IMR-90 (cell line): ENCODE measurements at regions of chr5 and their contacts with region 1.

Region 1: GRCh38 chr5:119411935-119412602 is 40.2 kb upstream of the HSD17B4 start:
- DNase-seq: peak; percentile 81
- ATAC-seq: peak; percentile 94
- H3K4me3 ChIP-seq: peak overlapping the region; percentile 59
- H3K27ac ChIP-seq: peak overlapping the region; percentile 65
- H3K4me1 ChIP-seq: peaks cover 2% of the 10 kb centered on the region
- H3K27me3 ChIP-seq: peaks cover 4% of the 10 kb centered on the region
- CTCF ChIP-seq: peak; percentile 91
- POLR2A ChIP-seq: peak; percentile 58
- RAD21 ChIP-seq: peak; percentile 89

Region 2: GRCh38 chr5:118987988-118988865 is 423.8 kb before region 1 on chr5 and contains the start of gene DTWD2:
- CTCF ChIA-PET with region 1: interaction called, 31 read pairs
- POLR2A ChIA-PET with region 1: no interaction called
- dilution Hi-C with region 1: no loop called
- in situ Hi-C with region 1: loop called (anchors 5 kb)
- intact Hi-C with region 1: loop called (anchors 1 kb)
- DNase-seq: peak; percentile 88
- ATAC-seq: peak; percentile 98
- H3K4me3 ChIP-seq: peak within 1 kb of the TSS; percentile 66
- H3K27ac ChIP-seq: peak within 1 kb of the TSS; percentile 66
- H3K4me1 ChIP-seq: no peaks in the 10 kb centered on the region
- H3K27me3 ChIP-seq: no peaks in the 10 kb centered on the region
- CTCF ChIP-seq: peak; percentile 93
- POLR2A ChIP-seq: no peak
- RAD21 ChIP-seq: peak; percentile 82
- total RNA-seq, gene DTWD2: 1.8 and 2.5 TPM in 2 replicates

Region 3: GRCh38 chr5:119022017-119022745 is 389.9 kb before region 1 on chr5:
- CTCF ChIA-PET with region 1: interaction called, 12 read pairs
- POLR2A ChIA-PET with region 1: no interaction called
- dilution Hi-C with region 1: no loop called
- in situ Hi-C with region 1: loop called (anchors 10 kb)
- intact Hi-C with region 1: loop called (anchors 1 kb)
- DNase-seq: peak; percentile 57
- ATAC-seq: peak; percentile 80
- H3K4me3 ChIP-seq: no peak overlapping the region
- H3K27ac ChIP-seq: no peak overlapping the region
- H3K4me1 ChIP-seq: no peaks in the 10 kb centered on the region
- H3K27me3 ChIP-seq: no peaks in the 10 kb centered on the region
- CTCF ChIP-seq: peak; percentile 66
- POLR2A ChIP-seq: no peak
- RAD21 ChIP-seq: peak; percentile 80

Region 4: GRCh38 chr5:119267958-119268386 is 144.1 kb before region 1 on chr5:
- CTCF ChIA-PET with region 1: interaction called, 9 read pairs
- POLR2A ChIA-PET with region 1: no interaction called
- dilution Hi-C with region 1: no loop called
- in situ Hi-C with region 1: loop called (anchors 5 kb)
- intact Hi-C with region 1: loop called (anchors 1 kb)
- DNase-seq: peak; percentile 95
- ATAC-seq: peak; percentile 90
- H3K4me3 ChIP-seq: peak overlapping the region; percentile 76
- H3K27ac ChIP-seq: peak overlapping the region; percentile 76
- H3K4me1 ChIP-seq: peaks cover 4% of the 10 kb centered on the region; the same call in 1 of the 2 replicates
- H3K27me3 ChIP-seq: no peaks in the 10 kb centered on the region
- CTCF ChIP-seq: peak; percentile 62
- POLR2A ChIP-seq: no peak
- RAD21 ChIP-seq: peak; percentile 39

Region 5: DNA sequence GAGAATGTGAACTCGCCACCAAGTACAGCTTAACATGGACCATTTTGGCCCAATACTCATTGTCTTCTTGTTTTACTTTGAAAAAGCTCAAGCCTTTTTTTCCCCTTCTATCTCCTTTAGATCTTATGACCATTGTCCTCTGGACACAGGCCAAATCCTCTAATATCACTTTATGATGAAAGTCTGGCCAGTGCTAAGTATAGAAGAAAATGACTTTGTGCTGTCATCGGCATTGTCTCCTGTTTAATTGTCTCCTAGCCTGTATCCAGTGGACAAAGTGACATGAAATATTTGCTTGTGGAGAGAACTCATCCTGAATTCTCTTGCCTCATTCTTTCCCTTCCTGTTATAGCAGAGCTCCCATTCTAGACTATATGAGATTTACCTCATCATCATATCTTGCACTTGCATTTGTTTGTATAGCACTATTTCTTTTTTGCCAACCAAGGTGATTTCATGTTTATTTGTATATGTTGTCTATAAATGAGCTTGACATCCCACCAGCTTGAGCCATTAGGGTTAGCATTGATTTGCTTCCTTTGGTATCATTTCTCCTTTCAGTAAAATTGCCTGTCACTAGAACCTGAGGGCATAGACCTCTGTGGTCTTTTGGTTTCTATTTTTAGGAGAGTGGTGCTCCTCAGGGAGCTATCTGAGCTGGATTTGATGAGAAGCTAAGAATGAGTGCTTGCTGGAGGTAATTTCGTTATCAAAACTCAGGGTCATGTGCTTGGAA is 75.1 kb before region 1 on chr5:
- CTCF ChIA-PET with region 1: interaction called, 7 read pairs
- POLR2A ChIA-PET with region 1: no interaction called
- dilution Hi-C with region 1: no loop called
- in situ Hi-C with region 1: no loop called
- intact Hi-C with region 1: loop called (anchors 1 kb)
- DNase-seq: no peak
- ATAC-seq: no peak
- H3K4me3 ChIP-seq: no peak overlapping the region
- H3K27ac ChIP-seq: no peak overlapping the region
- H3K4me1 ChIP-seq: peaks cover 4% of the 10 kb centered on the region
- H3K27me3 ChIP-seq: no peaks in the 10 kb centered on the region
- CTCF ChIP-seq: no peak
- POLR2A ChIP-seq: no peak
- RAD21 ChIP-seq: no peak

Region 6: GRCh38 chr5:119355685-119356611 is 56.1 kb before region 1 on chr5 and contains the start of gene TNFAIP8:
- CTCF ChIA-PET with region 1: interaction called, 22 read pairs
- POLR2A ChIA-PET with region 1: no interaction called
- dilution Hi-C with region 1: no loop called
- in situ Hi-C with region 1: no loop called
- intact Hi-C with region 1: loop called (anchors 1 kb)
- DNase-seq: peak; percentile 70
- ATAC-seq: peak; percentile 78
- H3K4me3 ChIP-seq: peak within 1 kb of the TSS; percentile 74
- H3K27ac ChIP-seq: peak within 1 kb of the TSS; percentile 88
- H3K4me1 ChIP-seq: peaks cover 14% of the 10 kb centered on the region
- H3K27me3 ChIP-seq: no peaks in the 10 kb centered on the region
- CTCF ChIP-seq: no peak
- POLR2A ChIP-seq: no peak
- RAD21 ChIP-seq: no peak
- total RNA-seq, gene TNFAIP8: 29.9 and 42.5 TPM in 2 replicates

Region 7: GRCh38 chr5:119389288-119390030 is 22.6 kb before region 1 on chr5:
- CTCF ChIA-PET with region 1: interaction called, 10 read pairs
- POLR2A ChIA-PET with region 1: no interaction called
- dilution Hi-C with region 1: no loop called
- in situ Hi-C with region 1: no loop called
- intact Hi-C with region 1: no loop called
- DNase-seq: peak; percentile 48
- ATAC-seq: peak; percentile 76
- H3K4me3 ChIP-seq: no peak overlapping the region; the same call in 1 of the 2 replicates
- H3K27ac ChIP-seq: peak overlapping the region; percentile 50; the same call in 1 of the 2 replicates
- H3K4me1 ChIP-seq: peaks cover 6% of the 10 kb centered on the region
- H3K27me3 ChIP-seq: no peaks in the 10 kb centered on the region
- CTCF ChIP-seq: no peak
- POLR2A ChIP-seq: no peak
- RAD21 ChIP-seq: no peak

Region 8: GRCh38 chr5:119721775-119722174 is 309.7 kb after region 1 on chr5:
- CTCF ChIA-PET with region 1: no interaction called
- POLR2A ChIA-PET with region 1: no interaction called
- dilution Hi-C with region 1: no loop called
- in situ Hi-C with region 1: no loop called
- intact Hi-C with region 1: no loop called
- DNase-seq: no peak
- ATAC-seq: no peak
- H3K4me3 ChIP-seq: no peak overlapping the region
- H3K27ac ChIP-seq: no peak overlapping the region
- H3K4me1 ChIP-seq: no peaks in the 10 kb centered on the region
- H3K27me3 ChIP-seq: no peaks in the 10 kb centered on the region
- CTCF ChIP-seq: no peak
- POLR2A ChIP-seq: no peak
- RAD21 ChIP-seq: no peak